ENCODE measurements at regions of chr5 and their contacts with region 1.

Region 1: GRCh38 chr5:1385395-1386273 is 40.7 kb upstream of the CLPTM1L start:
- DNase-seq: peak; percentile 89
- ATAC-seq: peak; percentile 95
- H3K4me3 Mint-ChIP-seq: peak overlapping the region; percentile 87
- H3K27ac Mint-ChIP-seq: peak overlapping the region; percentile 90
- H3K4me1 Mint-ChIP-seq: peaks cover 23% of the 10 kb centered on the region
- H3K27me3 Mint-ChIP-seq: peaks cover 4% of the 10 kb centered on the region

Region 2: DNA sequence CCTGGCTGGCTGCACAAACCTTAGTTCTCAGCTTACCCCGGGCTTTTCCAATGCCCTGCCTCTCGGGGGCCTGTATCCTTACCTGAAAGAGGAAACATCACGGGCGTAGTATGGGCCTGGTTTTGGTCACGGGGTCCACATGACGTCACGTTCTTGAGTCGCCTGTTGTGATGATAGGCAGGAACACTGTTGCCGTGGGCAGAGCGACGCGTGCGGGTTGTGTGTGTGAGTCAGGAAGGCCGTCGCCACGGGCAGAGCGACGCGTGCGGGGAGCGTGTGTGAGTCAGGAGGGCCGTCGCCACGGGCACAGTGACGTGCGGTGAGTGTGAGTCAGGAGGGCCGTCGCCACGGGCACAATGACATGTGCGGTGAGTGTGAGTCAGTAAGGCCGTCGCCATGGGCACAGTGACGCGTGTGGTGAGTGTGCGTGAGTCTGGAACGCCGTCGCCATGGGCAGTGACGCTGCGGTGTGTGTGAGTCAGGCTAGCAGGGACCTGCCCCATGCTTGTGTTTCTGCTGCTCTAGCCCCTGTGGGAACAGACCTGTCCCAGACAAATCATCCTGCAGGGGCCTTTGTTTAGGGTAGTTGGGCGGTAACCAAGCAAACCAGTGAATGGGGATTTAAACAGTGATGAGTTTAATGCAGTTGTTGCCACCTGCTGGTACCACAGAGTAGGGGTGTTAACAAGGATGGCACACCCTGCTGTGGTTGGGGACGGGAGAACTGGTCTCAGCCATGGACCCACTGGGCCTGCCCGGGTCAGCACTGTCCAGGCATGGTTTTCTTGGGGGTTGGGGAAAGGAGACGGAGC is 473.1 kb before region 1 on chr5:
- CTCF ChIA-PET with region 1: no interaction called
- POLR2A ChIA-PET with region 1: no interaction called
- intact Hi-C with region 1: no loop called
- DNase-seq: peak; percentile 88
- ATAC-seq: peak; percentile 95
- H3K4me3 Mint-ChIP-seq: no peak overlapping the region
- H3K27ac Mint-ChIP-seq: peak overlapping the region; percentile 71
- H3K4me1 Mint-ChIP-seq: peaks cover 13% of the 10 kb centered on the region
- H3K27me3 Mint-ChIP-seq: no peaks in the 10 kb centered on the region

Region 3: GRCh38 chr5:1294835-1295649 is 90.6 kb before region 1 on chr5 and contains the start of gene TERT:
- CTCF ChIA-PET with region 1: no interaction called
- POLR2A ChIA-PET with region 1: no interaction called
- intact Hi-C with region 1: loop called in 1 of 2 experiments (anchors 2 kb)
- DNase-seq: peak; percentile 90
- ATAC-seq: peak; percentile 88
- H3K4me3 Mint-ChIP-seq: peak within 1 kb of the TSS; percentile 55
- H3K27ac Mint-ChIP-seq: no peak within 1 kb of the TSS
- H3K4me1 Mint-ChIP-seq: peaks cover 11% of the 10 kb centered on the region
- H3K27me3 Mint-ChIP-seq: no peaks in the 10 kb centered on the region
- total RNA-seq, gene TERT: 8.5 to 11.9 TPM

Region 4: DNA sequence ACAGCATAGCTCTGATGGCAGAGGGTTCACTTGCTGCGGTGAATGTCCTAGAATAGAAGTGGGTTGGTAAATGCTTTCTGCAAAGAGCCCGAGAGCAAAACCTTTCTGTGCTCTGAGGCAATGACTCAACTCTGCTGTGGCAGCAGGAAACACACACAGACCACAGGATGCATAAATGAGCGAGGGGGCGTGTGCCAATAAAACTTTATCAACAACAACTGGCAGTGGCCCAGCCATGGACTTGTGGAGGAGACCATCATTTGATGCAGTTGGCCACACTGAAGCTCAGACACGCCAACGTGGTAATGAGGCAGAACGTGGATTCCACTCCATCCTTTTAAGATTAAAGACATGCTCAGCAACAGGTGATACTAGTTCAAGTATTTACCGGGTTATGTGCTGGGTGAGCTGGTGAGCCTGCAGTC is 407.2 kb after region 1 on chr5:
- CTCF ChIA-PET with region 1: no interaction called
- POLR2A ChIA-PET with region 1: no interaction called
- intact Hi-C with region 1: loop called in 1 of 2 experiments (anchors 5 kb)
- DNase-seq: peak; percentile 88
- ATAC-seq: peak; percentile 91
- H3K4me3 Mint-ChIP-seq: peak overlapping the region; percentile 66
- H3K27ac Mint-ChIP-seq: peak overlapping the region; percentile 93
- H3K4me1 Mint-ChIP-seq: peaks cover 76% of the 10 kb centered on the region
- H3K27me3 Mint-ChIP-seq: no peaks in the 10 kb centered on the region